ENCODE measurements at regions of chr17 and their contacts with region 1.

Region 1: DNA sequence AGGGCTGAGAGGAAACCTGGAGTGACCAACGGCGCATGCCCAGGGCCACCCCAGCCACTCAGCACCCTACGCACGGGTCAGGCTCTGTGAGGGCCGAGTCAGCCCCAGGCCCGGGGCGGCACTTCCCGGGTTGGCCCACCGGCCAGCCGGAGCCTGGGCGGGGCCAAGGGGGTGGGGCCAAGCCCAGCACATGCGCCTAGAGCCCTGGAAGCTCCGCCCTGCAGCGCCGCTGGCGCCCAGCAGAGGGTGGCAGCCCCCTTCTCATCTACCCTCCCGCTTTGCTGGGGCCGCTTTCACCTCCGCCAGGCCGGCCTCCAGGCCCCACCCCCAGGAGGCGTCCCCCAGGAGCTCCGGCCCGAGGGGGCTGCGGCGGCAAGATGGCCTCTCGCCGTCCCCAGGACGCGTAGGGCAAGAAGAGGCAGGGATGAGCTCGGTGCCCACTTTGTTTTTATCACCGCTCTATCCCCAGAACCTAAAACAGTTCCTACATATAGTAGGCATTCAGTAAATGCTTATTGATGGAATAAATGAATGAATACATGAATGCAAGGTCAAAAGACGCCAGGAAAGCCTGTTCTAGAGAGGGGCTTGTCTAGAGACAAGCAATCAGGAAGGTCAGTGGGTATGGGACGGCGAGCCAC is 31.3 kb downstream of the MYO18A start:
- DNase-seq: peak; percentile 99
- H3K4me3 ChIP-seq: peak overlapping the region; percentile 47 to 50
- H3K27ac ChIP-seq: peak overlapping the region; percentile 50 to 82; a peak in 3 of 4 replicates
- H3K4me1 ChIP-seq: peaks cover 30 to 35% of the 10 kb centered on the region in 2 experiments
- H3K27me3 ChIP-seq: no peaks in the 10 kb centered on the region
- CTCF ChIP-seq: peak; percentile 81
- EP300 ChIP-seq: 0 out of 4 replicates have a peak, but pooled peaks of 1 of the 2 experiments have one; percentile 17
- RAD21 ChIP-seq: peak; percentile 91

Region 2: GRCh38 chr17:29059281-29059680 is 89.6 kb before region 1 on chr17:
- CTCF ChIA-PET with region 1: no interaction called
- POLR2A ChIA-PET with region 1: no interaction called
- DNase-seq: no peak
- H3K4me3 ChIP-seq: no peak overlapping the region
- H3K27ac ChIP-seq: no peak overlapping the region
- H3K4me1 ChIP-seq: peaks cover 7 to 45% of the 10 kb centered on the region in 2 experiments; a peak in 3 of 4 replicates
- H3K27me3 ChIP-seq: no peaks in the 10 kb centered on the region
- CTCF ChIP-seq: no peak
- EP300 ChIP-seq: no peak
- RAD21 ChIP-seq: no peak

Region 3: DNA sequence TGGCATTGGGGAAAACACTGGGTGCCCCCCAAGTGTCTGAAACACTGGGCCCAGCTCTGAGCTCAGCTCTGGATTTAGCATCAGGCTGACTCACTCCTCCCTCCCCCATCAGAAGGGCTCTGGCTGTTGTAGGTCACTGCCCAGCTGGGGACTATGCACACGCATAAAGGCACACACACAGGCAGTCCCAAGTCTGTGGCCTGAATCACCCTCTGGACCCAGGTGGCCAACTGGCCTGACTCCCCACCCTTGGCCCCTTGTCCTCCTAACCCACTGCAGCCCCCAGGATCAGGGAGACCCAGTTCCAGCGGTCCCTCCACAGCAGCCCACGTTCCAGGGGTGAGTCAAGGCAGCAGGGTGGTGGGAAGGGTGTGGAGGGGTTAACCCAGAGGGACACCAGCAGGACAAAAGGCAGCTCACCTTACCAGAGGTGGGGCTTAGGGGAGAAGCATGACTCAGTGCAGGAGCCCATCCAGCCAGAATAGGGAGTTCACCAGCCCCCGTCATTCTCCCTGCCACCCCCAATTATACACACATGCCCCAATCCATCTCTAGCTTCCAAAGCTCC is 15.7 kb before region 1 on chr17:
- CTCF ChIA-PET with region 1: interaction called, 535 read pairs
- POLR2A ChIA-PET with region 1: no interaction called
- DNase-seq: no peak
- H3K4me3 ChIP-seq: no peak overlapping the region
- H3K27ac ChIP-seq: peak overlapping the region; percentile 50 to 62; a peak in 2 of 4 replicates
- H3K4me1 ChIP-seq: peaks cover 20 to 27% of the 10 kb centered on the region in 2 experiments
- H3K27me3 ChIP-seq: no peaks in the 10 kb centered on the region
- CTCF ChIP-seq: no peak
- EP300 ChIP-seq: no peak
- RAD21 ChIP-seq: no peak

Region 4: DNA sequence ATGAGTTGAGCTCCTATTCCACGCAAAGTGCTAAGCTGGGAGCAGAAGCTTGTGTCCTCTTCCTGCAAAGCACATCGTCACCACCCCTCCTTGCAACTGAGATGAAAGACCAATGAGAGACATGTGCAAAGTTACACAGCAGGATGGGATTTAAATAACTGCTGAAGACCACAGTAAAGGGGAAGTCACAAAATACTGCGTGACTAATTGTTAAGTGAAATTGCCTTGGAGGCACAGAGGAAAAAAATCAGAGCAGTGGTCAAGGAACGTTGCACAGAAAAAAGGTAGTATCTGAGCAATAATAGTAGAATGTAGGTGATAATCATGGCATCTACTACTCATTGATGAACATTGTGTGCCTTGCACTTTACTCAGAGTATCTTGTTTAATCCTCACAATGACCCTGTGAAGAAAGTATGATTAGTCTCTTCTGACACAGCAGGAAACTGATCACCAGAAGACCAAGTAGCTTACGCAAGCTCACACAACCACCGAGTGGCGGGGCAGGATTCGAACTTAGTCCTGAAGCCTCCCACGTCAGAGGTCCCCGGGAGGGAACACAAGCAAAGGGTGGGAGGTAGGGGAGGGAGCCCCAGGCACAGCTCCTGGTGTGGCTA is 46.7 kb after region 1 on chr17:
- CTCF ChIA-PET with region 1: interaction called, 23 read pairs
- POLR2A ChIA-PET with region 1: no interaction called
- DNase-seq: no peak
- H3K4me3 ChIP-seq: no peak overlapping the region
- H3K27ac ChIP-seq: no peak overlapping the region
- H3K4me1 ChIP-seq: no peaks in the 10 kb centered on the region
- H3K27me3 ChIP-seq: no peaks in the 10 kb centered on the region; the same call in 1 of the 2 replicates
- CTCF ChIP-seq: no peak
- EP300 ChIP-seq: no peak
- RAD21 ChIP-seq: no peak

Region 5: GRCh38 chr17:29219378-29220047 is 70.6 kb after region 1 on chr17:
- CTCF ChIA-PET with region 1: interaction called, 438 read pairs
- POLR2A ChIA-PET with region 1: interaction called, 3 read pairs
- DNase-seq: peak; percentile 86
- H3K4me3 ChIP-seq: peak overlapping the region in 1 of 2 experiments; percentile 17; a peak in 1 of 4 replicates
- H3K27ac ChIP-seq: no peak overlapping the region
- H3K4me1 ChIP-seq: peaks cover 0 to 6% of the 10 kb centered on the region in 2 experiments; a peak in 1 of 4 replicates
- H3K27me3 ChIP-seq: no peaks in the 10 kb centered on the region
- CTCF ChIP-seq: peak; percentile 97
- EP300 ChIP-seq: no peak; a peak in 1 of 4 replicates
- RAD21 ChIP-seq: peak; percentile 75

Region 6: DNA sequence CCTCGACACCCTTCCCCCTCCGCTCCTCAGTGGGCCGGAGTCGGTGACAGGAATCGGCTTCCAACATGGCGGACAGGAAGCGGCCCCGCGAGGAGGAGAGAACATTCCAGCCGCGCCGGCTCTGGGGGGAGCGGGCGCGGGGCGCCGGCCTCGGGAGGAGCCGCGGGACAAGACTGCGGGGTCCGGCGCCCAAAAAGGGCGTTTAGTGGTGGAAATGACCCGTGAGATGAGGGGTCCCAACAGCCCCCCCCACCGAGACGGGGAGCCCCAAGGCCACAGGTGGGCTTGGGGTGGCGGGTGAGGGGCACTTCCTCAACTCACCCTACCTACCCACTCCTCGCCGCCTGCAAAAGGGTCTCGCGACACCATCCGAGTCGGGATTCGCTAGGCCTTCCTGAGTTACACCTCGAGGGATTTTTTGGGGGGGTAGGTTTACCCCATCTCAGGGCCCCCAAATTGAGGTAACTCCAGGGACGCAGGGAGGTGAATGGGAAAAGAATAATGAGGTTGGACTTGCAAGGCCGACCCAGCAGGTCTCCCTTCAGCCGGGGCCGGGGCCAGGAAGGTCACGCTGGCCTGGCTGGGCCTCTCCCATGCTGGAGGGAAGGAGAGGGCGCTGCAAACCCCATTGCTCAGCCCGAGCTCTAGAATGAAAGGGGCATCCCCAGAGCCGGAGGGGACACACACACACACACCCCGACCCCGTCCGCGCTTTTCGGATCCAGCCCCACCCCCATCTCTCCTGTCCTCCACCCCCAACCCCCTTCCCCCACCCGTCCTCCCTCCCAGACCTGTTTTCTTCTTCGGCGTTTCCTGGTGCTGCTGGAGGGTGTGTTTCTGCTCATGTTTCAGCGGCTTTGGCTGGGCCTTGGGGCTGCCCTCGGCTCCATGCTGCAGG is 144.3 kb after region 1 on chr17:
- CTCF ChIA-PET with region 1: interaction called, 33 read pairs
- POLR2A ChIA-PET with region 1: interaction called, 8 read pairs
- DNase-seq: peak; percentile 67
- H3K4me3 ChIP-seq: peak overlapping the region; percentile 87 to 99
- H3K27ac ChIP-seq: peak overlapping the region; percentile 94 to 95
- H3K4me1 ChIP-seq: peaks cover 15 to 22% of the 10 kb centered on the region in 2 experiments; a peak in 3 of 4 replicates
- H3K27me3 ChIP-seq: no peaks in the 10 kb centered on the region
- CTCF ChIP-seq: no peak
- EP300 ChIP-seq: peak in 1 of 2 experiments; percentile 19; a peak in 1 of 4 replicates
- RAD21 ChIP-seq: no peak